AG04450 (cell line): ENCODE measurements at regions of chr2 and their contacts with region 1.

Region 1: GRCh38 chr2:226799181-226799975 is at the start of gene IRS1:
- DNase-seq: no peak
- H3K4me3 ChIP-seq: peak within 1 kb of the TSS; percentile 91
- H3K27ac ChIP-seq: peak within 1 kb of the TSS; percentile 89
- H3K27me3 ChIP-seq: no peaks in the 10 kb centered on the region
- CTCF ChIP-seq: 0 out of 2 replicates have a peak, but pooled peaks have one; percentile 22
- polyA plus RNA-seq, gene IRS1: 32.9 and 36.6 TPM in 2 replicates

Region 2: GRCh38 chr2:225668606-225669266 is 1130.6 kb before region 1 on chr2:
- CTCF ChIA-PET with region 1: interaction called, 59 read pairs
- POLR2A ChIA-PET with region 1: interaction called, 3 read pairs
- DNase-seq: peak; percentile 56
- H3K4me3 ChIP-seq: no peak overlapping the region
- H3K27ac ChIP-seq: no peak overlapping the region
- H3K27me3 ChIP-seq: no peaks in the 10 kb centered on the region
- CTCF ChIP-seq: peak; percentile 90

Region 3: GRCh38 chr2:226738821-226739544 is 60.4 kb before region 1 on chr2:
- CTCF ChIA-PET with region 1: no interaction called
- POLR2A ChIA-PET with region 1: no interaction called
- DNase-seq: no peak
- H3K4me3 ChIP-seq: no peak overlapping the region
- H3K27ac ChIP-seq: peak overlapping the region; percentile 12
- H3K27me3 ChIP-seq: no peaks in the 10 kb centered on the region
- CTCF ChIP-seq: no peak

Region 4: GRCh38 chr2:226813148-226813701 is 13.8 kb after region 1 on chr2:
- CTCF ChIA-PET with region 1: interaction called, 14 read pairs
- POLR2A ChIA-PET with region 1: no interaction called
- DNase-seq: no peak
- H3K4me3 ChIP-seq: no peak overlapping the region
- H3K27ac ChIP-seq: no peak overlapping the region
- H3K27me3 ChIP-seq: no peaks in the 10 kb centered on the region
- CTCF ChIP-seq: peak; percentile 53

Region 5: GRCh38 chr2:226825056-226825455 is 25.7 kb after region 1 on chr2:
- CTCF ChIA-PET with region 1: interaction called, 16 read pairs
- POLR2A ChIA-PET with region 1: no interaction called
- DNase-seq: no peak
- H3K4me3 ChIP-seq: no peak overlapping the region
- H3K27ac ChIP-seq: no peak overlapping the region
- H3K27me3 ChIP-seq: no peaks in the 10 kb centered on the region
- CTCF ChIP-seq: no peak

Region 6: DNA sequence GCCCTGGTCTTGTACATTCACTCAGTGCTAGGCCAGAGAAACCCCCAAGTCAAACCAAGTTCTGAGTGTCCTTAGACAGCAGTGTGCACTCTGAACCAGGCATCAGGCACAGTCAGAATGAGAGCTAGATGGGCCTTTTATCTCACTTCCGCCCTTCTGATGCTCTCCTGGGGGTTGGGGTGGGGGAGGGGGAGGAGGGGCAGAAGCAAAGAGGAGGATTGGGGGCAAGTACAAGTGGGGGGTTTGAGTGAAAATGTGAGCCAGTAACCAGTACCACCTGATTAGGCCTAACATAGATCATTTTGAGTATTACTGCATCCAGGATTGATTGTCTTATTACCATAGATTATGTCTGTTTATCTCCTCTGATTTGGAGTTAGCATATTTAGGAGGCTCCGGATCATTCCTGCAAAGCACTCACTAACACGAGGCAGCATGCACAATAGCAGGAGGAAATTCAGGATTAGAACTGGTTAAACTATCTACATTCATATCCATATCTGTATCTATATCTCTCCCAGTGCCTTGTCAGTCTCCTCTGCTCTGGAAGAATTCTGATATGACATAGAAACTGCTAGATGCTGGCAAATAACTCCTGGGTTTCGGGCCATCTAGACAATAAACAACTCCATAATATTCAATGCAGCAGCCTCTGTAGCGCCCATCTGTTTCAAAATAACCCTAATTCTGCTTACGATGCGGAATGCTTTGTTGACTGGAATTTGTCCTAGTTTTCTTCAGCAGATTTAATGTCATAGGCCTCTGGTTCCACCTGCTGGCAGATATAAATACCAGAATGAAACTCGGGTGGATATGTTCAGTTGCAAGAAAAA is 185.6 kb after region 1 on chr2:
- CTCF ChIA-PET with region 1: interaction called, 105 read pairs
- POLR2A ChIA-PET with region 1: interaction called, 6 read pairs
- DNase-seq: peak; percentile 66
- H3K4me3 ChIP-seq: no peak overlapping the region
- H3K27ac ChIP-seq: no peak overlapping the region
- H3K27me3 ChIP-seq: no peaks in the 10 kb centered on the region
- CTCF ChIP-seq: peak; percentile 74

Region 7: DNA sequence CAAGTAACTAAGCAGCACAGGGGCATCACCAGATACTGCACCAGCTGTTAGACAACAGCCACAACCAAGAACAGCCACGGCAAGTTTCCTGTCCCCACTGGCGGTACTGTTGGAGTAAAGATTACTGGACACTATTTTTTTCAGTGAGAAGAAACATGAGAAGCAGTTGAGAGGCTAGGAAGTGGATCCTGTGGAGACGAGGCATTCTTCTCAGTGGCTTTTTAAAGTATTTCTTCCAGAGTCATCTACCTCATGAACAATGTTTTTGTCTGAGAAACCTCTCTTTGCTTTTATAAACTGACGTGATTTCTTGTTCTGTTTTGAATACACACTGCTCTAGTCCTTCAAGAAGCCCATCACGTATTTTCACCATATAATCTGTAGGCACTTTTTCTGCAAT is 561.0 kb after region 1 on chr2:
- CTCF ChIA-PET with region 1: no interaction called
- POLR2A ChIA-PET with region 1: no interaction called
- DNase-seq: no peak
- H3K4me3 ChIP-seq: no peak overlapping the region
- H3K27ac ChIP-seq: no peak overlapping the region
- H3K27me3 ChIP-seq: no peaks in the 10 kb centered on the region
- CTCF ChIP-seq: no peak